Common myeloid progenitor, CD34-positive (primary cell): ENCODE measurements at regions of chr1 and their contacts with region 1.

Region 1: DNA sequence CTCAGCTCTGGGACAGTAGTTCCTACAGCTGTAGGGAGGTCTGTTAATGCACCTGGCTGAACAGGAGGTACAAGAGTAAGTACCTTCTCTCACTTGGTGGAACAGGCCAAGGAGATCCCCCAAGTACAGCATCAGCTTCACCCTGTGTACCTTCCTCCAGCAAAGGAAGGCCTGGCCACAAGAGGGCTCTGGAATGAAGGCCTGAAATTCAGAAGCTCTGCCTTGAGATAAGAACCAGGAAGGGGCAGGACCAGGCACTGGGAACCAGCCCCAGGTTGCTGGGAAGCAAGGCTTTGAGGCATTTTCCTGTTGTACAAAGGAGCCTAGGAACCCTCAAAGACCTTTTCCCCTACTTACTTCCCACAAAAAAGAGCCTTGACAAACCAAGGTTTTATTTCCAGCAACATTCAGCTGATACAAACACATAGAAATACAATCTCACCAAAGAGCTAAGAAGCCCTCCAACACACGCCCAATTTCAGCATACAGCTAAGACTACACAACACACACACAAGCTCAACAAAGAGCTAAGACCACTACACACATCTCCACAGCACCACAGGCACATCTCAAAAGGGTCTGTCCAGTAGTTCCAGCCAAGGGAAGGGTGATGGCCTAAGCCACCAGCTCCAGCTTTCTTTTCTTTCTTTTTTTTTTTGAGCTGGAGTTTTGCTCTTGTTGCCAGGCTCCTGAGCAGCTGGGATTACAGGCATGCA is 23.5 kb downstream of the F11R start:
- DNase-seq: peak; percentile 63 to 74 (median 73)
- H3K4me3 ChIP-seq: no peak overlapping the region
- H3K27ac ChIP-seq: peak overlapping the region in 1 of 2 experiments; percentile 52
- H3K4me1 ChIP-seq: peaks cover 0 to 6% (median 5%) of the 10 kb centered on the region in 4 experiments
- H3K27me3 ChIP-seq: no peaks in the 10 kb centered on the region

Region 2: GRCh38 chr1:160911441-160911840 is 86.0 kb before region 1 on chr1:
- CTCF ChIA-PET with region 1: no interaction called
- POLR2A ChIA-PET with region 1: no interaction called
- DNase-seq: peak in 1 of 3 donors; percentile 48
- H3K4me3 ChIP-seq: no peak overlapping the region
- H3K27ac ChIP-seq: no peak overlapping the region
- H3K4me1 ChIP-seq: no peaks in the 10 kb centered on the region
- H3K27me3 ChIP-seq: no peaks in the 10 kb centered on the region

Region 3: DNA sequence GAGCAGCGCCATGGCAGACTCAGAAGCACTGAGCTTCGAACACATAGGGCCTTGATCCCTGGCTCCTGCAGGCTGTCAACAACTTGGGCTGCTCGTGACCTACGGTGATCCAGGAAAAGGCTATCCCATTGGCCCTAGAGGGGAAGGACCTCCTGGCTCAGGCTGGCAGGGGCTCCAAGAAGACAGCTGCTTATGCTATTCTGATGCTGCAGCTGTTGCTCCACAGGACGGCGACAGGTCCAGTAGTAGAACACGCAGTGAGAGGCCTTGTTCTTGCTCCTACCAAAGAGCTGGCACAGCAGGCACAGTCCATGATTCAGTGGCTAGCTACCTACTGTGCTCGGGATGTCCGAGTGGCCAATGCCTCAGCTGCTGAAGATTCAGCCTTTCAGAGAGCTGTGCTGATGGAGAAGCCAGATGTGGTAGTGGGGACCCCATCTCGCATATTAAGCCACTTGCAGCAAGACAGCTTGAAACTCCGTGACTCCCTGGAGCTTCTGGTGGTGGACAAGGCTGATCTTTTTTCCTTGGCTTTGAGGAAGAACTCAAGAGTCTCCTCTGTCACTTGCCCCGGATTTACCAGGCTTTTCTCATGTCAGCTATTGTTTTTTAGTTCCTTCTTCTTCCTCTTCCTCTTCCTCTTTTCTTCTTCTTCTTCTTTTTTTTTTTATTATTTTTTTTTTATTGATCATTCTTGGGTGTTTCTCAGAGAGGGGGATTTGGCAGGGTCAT is 61.8 kb before region 1 on chr1:
- CTCF ChIA-PET with region 1: no interaction called
- POLR2A ChIA-PET with region 1: no interaction called
- DNase-seq: peak in 1 of 3 donors; percentile 5
- H3K4me3 ChIP-seq: no peak overlapping the region
- H3K27ac ChIP-seq: no peak overlapping the region
- H3K4me1 ChIP-seq: peaks cover 0 to 6% (median 0%) of the 10 kb centered on the region in 4 experiments
- H3K27me3 ChIP-seq: no peaks in the 10 kb centered on the region

Region 4: DNA sequence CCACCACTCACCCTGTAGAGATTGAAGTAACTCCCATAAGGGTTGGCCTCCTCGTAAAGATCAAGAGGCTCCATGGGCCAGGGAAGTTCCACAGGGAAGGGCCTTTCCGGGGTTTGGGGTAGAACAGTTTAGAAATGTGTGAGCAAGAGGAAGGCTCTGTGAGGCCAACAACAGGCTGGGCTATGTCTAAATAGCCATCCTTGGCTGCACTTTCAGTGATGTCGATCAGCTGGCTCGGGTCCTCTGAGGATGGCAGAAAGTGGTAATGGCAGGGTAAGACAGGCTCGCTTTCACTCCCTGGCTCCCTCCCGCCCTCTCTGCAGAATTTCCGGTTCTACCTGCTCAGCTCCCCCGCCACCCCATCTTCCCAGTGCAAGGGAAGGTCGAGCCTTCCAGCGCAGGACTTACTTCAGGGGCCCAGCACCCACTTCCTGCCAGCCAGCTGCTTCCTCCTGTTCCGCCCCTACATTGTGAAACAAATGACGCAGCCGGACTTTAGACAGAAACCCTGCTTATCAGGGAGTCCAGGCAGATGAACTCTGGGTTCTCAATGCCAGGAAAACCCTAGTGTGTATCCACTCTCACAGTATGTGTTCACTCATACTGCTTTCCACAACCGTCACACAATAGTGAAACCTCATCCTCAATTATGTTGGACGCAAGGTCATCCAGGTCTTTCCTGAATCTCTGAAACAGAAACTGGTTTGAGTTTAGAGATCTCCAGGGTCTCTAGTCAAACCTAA is 16.2 kb after region 1 on chr1:
- CTCF ChIA-PET with region 1: interaction called, 120 read pairs
- POLR2A ChIA-PET with region 1: interaction called, 14 read pairs
- DNase-seq: peak; percentile 95 to 99 (median 98)
- H3K4me3 ChIP-seq: peak overlapping the region; percentile 12 to 73 (median 52)
- H3K27ac ChIP-seq: peak overlapping the region; percentile 83 to 90
- H3K4me1 ChIP-seq: peaks cover 15 to 48% (median 37%) of the 10 kb centered on the region in 4 experiments
- H3K27me3 ChIP-seq: no peaks in the 10 kb centered on the region

Region 5: GRCh38 chr1:161038523-161039153 is 41.2 kb after region 1 on chr1 and contains the start of gene TSTD1:
- CTCF ChIA-PET with region 1: interaction called, 56 read pairs
- POLR2A ChIA-PET with region 1: interaction called, 7 read pairs
- DNase-seq: peak; percentile 81 to 96 (median 92)
- H3K4me3 ChIP-seq: peak within 1 kb of the TSS; percentile 60 to 91 (median 75)
- H3K27ac ChIP-seq: peak within 1 kb of the TSS; percentile 25 to 77
- H3K4me1 ChIP-seq: peaks cover 0 to 24% (median 19%) of the 10 kb centered on the region in 4 experiments
- H3K27me3 ChIP-seq: no peaks in the 10 kb centered on the region

Region 6: DNA sequence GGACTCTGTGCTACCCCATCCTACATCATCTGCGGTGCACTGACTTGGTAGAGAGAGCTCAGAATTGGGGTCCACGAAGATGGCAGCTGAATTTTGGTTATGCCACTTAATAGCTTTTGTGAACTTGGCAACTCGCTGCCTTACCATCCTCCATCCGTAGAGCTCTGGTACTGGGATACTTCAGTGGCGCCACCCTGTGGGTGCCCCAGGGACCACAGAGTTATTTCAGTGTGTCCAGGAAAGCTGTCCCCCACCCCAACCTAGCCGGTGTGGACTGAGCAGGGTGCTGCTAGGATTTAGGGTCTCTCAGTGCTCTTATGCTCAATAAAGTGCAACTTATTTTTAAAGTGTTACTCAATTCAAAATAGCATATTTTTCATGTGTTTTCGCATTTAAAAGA is 57.3 kb after region 1 on chr1:
- CTCF ChIA-PET with region 1: interaction called, 10 read pairs
- POLR2A ChIA-PET with region 1: no interaction called
- DNase-seq: no peak
- H3K4me3 ChIP-seq: no peak overlapping the region
- H3K27ac ChIP-seq: no peak overlapping the region
- H3K4me1 ChIP-seq: no peaks in the 10 kb centered on the region
- H3K27me3 ChIP-seq: no peaks in the 10 kb centered on the region

Region 7: DNA sequence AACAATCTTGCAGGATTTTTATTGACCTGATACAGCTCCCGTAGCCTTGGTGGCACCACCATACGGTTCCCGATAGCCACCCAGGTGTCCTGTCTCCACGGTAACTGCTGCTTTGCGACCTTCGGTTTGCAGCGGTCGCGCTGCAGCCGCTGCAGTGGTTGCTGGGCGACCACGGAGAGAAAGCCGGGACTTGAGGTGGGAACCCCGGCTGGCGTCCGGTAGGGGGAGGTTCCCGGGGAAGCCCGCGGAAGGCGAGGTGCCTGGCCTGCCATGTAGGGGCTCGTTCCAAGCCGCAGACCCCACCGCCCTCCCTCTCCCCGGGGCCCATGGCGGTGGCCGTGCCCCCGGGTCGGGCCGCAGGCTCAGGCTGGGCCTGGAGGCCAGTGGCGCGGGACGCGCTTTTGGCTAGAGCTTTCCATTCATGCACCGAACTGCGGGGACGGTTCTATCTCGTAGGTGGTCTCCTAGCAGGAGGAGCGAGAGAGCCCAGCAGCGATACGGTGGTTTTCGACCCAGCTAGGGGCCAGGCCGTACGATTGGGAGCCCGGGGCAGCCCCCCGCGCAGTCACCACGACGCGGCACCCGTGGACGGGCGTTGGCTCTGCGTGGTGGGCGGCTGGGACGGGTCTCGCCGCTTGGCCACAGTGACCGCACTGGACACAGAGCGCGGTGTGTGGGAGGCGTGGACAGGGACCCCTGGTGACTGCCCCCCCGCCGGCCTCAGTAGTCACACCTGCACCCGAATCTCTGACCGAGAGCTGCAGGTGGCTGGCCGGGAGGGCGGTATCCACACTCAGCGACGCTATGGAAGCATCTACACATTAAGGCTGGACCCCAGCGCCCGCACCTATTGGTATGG is 101.0 kb after region 1 on chr1 and contains the start of gene KLHDC9:
- CTCF ChIA-PET with region 1: interaction called, 69 read pairs
- POLR2A ChIA-PET with region 1: interaction called, 5 read pairs
- DNase-seq: peak; percentile 86 to 89 (median 86)
- H3K4me3 ChIP-seq: peak within 1 kb of the TSS; percentile 59 to 91 (median 74)
- H3K27ac ChIP-seq: peak within 1 kb of the TSS in 1 of 2 experiments; percentile 50
- H3K4me1 ChIP-seq: peaks cover 0 to 20% (median 20%) of the 10 kb centered on the region in 4 experiments
- H3K27me3 ChIP-seq: no peaks in the 10 kb centered on the region

Region 8: GRCh38 chr1:161139765-161140164 is 142.3 kb after region 1 on chr1:
- CTCF ChIA-PET with region 1: interaction called, 26 read pairs
- POLR2A ChIA-PET with region 1: no interaction called
- DNase-seq: peak; percentile 69 to 84 (median 74)
- H3K4me3 ChIP-seq: no peak overlapping the region
- H3K27ac ChIP-seq: no peak overlapping the region
- H3K4me1 ChIP-seq: peaks cover 0 to 12% (median 0%) of the 10 kb centered on the region in 4 experiments
- H3K27me3 ChIP-seq: no peaks in the 10 kb centered on the region